Prostate gland (tissue), 2 donors: ENCODE measurements at regions of chr15 and their contacts with region 1.

Region 1: DNA sequence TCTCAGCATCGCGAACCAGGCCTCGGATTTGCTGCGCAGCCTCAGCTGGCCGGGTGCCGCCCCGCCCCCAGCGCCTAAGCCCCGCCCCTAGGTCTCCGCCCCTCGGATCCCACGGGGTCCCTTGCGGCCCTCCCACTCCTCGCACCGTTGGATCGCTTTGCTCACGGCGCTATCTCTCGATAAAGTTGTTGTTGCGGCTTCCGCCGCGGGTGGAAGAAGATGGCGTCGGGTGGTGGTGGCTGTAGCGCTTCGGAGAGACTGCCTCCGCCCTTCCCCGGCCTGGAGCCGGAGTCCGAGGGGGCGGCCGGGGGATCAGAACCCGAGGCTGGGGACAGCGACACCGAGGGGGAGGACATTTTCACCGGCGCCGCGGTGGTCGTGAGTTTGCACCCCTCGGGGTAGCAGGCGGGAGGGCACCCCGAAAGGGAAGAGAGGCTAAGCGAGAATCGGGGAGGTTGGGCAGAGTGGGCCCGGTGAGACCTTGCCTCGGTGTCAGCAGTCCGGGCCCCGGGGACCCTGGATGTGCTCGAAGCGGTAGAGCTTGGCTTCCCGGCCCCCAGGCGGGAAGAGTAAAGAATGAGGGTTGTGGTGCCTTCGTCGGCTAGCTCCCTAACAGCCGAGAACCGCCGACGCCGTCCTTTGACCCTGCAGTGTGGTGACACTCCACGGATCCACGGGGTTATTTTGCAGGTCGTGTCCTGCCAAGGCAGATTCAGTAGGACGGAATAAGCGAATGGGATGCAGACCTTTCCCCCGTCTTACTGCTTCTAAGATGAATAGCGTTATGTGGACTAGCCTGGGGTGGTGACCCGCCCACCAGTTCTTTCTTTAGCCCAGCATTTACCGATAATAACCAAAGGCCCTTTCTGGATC is at the start of gene SNX1:
- DNase-seq: peak; percentile 95
- H3K4me3 ChIP-seq: peak within 1 kb of the TSS; percentile 82 to 86
- H3K27ac ChIP-seq: peak within 1 kb of the TSS; percentile 78 to 82
- H3K4me1 ChIP-seq: peaks cover 9% of the 10 kb centered on the region
- H3K27me3 ChIP-seq: no peaks in the 10 kb centered on the region
- CTCF ChIP-seq: peak in 2 of 4 experiments; percentile 43 to 46
- POLR2A ChIP-seq: peak; percentile 91
- total RNA-seq, gene SNX1: 109 to 110 TPM

Region 2: GRCh38 chr15:63998489-63998888 is 97.5 kb before region 1 on chr15:
- intact Hi-C with region 1: no loop called
- DNase-seq: no peak
- H3K4me3 ChIP-seq: no peak overlapping the region
- H3K27ac ChIP-seq: no peak overlapping the region
- H3K4me1 ChIP-seq: no peaks in the 10 kb centered on the region
- H3K27me3 ChIP-seq: no peaks in the 10 kb centered on the region
- CTCF ChIP-seq: no peak
- POLR2A ChIP-seq: no peak

Region 3: GRCh38 chr15:64162870-64163658 is 67.0 kb after region 1 on chr15 and contains the start of gene PPIB:
- intact Hi-C with region 1: loop called (anchors 5 kb)
- DNase-seq: peak; percentile 97
- H3K4me3 ChIP-seq: peak within 1 kb of the TSS; percentile 78 to 80
- H3K27ac ChIP-seq: peak within 1 kb of the TSS; percentile 79 to 85
- H3K4me1 ChIP-seq: peaks cover 15% of the 10 kb centered on the region
- H3K27me3 ChIP-seq: no peaks in the 10 kb centered on the region
- CTCF ChIP-seq: peak in 3 of 4 experiments; percentile 27 to 66 (median 61)
- POLR2A ChIP-seq: peak; percentile 61
- total RNA-seq, gene PPIB: 372 to 624 TPM